PC-9 (cell line): ENCODE measurements at regions of chr7 and their contacts with region 1.

Region 1: GRCh38 chr7:120805636-120806388 is 52.1 kb downstream of the TSPAN12 start:
- DNase-seq: peak in 1 of 2 experiments; percentile 51
- H3K4me3 ChIP-seq: no peak overlapping the region
- H3K27ac ChIP-seq: no peak overlapping the region
- H3K4me1 ChIP-seq: no peaks in the 10 kb centered on the region
- H3K27me3 ChIP-seq: no peaks in the 10 kb centered on the region
- CTCF ChIP-seq: peak; percentile 91

Region 2: DNA sequence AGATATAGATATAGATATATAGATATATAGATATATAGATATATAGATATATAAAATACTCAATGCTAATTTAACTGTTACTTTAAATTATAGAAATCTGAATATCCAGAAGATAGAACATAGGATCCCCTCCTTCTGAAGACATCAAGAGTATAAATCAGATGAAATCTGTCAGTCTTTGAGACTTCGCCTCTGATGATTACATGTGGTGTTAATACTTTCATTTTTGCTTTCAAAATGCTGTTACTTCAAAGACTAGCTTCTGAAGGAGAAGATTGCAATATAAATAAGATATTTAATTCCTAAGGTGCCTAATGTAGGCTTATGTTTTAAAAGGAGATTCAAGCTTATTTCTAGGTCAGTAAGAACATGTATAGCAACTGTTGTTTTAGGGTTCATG is 128.3 kb before region 1 on chr7:
- CTCF ChIA-PET with region 1: no interaction called
- POLR2A ChIA-PET with region 1: no interaction called
- intact Hi-C with region 1: no loop called
- DNase-seq: no peak
- H3K4me3 ChIP-seq: no peak overlapping the region
- H3K27ac ChIP-seq: no peak overlapping the region
- H3K4me1 ChIP-seq: no peaks in the 10 kb centered on the region
- H3K27me3 ChIP-seq: no peaks in the 10 kb centered on the region
- CTCF ChIP-seq: no peak

Region 3: DNA sequence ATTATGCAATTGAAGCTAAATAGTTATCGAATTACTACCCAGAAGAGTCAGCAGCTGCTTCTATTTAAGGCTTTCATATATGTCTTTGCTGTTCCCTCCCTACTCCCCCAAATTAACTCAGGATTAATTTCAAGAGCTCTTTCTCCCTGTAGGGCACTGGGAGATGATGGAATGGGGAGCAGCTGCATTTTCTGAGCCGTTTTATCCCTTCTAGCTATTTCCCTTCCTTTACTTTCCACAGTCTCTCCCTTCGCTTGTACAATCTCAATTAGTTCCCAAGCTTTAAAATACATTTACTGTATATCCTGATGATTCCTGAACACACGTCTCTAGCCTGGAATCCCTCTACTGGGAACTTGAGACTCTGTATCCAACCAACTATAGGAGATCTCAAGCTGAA is 71.9 kb after region 1 on chr7:
- CTCF ChIA-PET with region 1: no interaction called
- POLR2A ChIA-PET with region 1: no interaction called
- intact Hi-C with region 1: no loop called
- DNase-seq: no peak
- H3K4me3 ChIP-seq: no peak overlapping the region
- H3K27ac ChIP-seq: no peak overlapping the region
- H3K4me1 ChIP-seq: peaks cover 17% of the 10 kb centered on the region
- H3K27me3 ChIP-seq: no peaks in the 10 kb centered on the region
- CTCF ChIP-seq: no peak

Region 4: GRCh38 chr7:120916121-120916520 is 110.3 kb after region 1 on chr7:
- CTCF ChIA-PET with region 1: interaction called, 14 read pairs
- POLR2A ChIA-PET with region 1: no interaction called
- intact Hi-C with region 1: no loop called
- DNase-seq: no peak
- H3K4me3 ChIP-seq: no peak overlapping the region
- H3K27ac ChIP-seq: no peak overlapping the region
- H3K4me1 ChIP-seq: no peaks in the 10 kb centered on the region
- H3K27me3 ChIP-seq: no peaks in the 10 kb centered on the region
- CTCF ChIP-seq: no peak

Region 5: DNA sequence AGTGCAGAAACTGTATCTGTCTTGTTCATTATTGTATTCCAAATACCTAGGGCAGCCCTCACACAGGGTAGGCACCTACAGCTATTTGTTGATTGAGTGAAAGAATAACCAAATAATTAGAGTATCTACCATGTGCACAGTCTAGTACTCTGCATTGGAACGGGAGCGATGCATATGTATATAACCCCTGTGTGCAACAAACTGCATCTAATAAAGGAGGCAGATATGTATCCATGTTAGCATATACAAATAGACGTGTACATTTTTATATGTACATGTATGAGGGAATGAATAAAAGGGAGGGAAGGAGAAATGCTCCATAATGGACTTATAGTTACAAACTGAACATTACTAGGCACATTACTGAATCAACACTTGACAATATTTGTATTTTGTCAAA is 875.9 kb after region 1 on chr7:
- CTCF ChIA-PET with region 1: no interaction called
- POLR2A ChIA-PET with region 1: no interaction called
- intact Hi-C with region 1: no loop called
- DNase-seq: no peak
- H3K4me3 ChIP-seq: no peak overlapping the region
- H3K27ac ChIP-seq: no peak overlapping the region
- H3K4me1 ChIP-seq: no peaks in the 10 kb centered on the region
- H3K27me3 ChIP-seq: no peaks in the 10 kb centered on the region
- CTCF ChIP-seq: no peak

Region 6: DNA sequence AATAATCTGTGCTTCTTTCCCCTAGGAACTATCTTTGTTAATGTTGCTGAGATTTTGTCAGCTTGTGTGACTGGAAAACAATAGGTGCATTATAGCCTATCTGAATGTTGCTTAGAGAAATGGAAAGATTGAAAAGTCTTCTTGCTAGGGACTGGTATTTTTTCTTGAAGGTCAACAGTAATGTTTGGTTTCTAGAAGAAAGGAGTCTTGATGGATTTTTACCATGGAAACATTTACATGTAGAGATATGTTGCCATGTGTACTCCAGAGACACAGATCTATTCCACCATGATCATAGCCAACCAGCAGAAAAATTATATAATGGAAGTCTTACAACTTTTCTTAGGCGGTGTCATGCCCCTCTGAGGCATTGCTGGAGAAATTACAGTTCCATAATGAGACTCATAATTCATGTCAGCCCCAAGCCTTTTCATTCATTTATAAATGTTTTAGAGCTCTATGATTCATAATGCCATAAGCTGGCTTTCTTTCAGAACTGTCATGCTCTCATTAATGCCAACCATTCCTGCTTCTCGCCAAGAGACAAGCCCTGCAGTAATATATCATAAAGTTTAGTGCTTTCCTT is 892.0 kb after region 1 on chr7:
- CTCF ChIA-PET with region 1: no interaction called
- POLR2A ChIA-PET with region 1: no interaction called
- intact Hi-C with region 1: no loop called
- DNase-seq: no peak
- H3K4me3 ChIP-seq: no peak overlapping the region
- H3K27ac ChIP-seq: no peak overlapping the region
- H3K4me1 ChIP-seq: no peaks in the 10 kb centered on the region
- H3K27me3 ChIP-seq: no peaks in the 10 kb centered on the region
- CTCF ChIP-seq: no peak